Transverse colon (tissue), 4 donors: ENCODE measurements at regions of chr14 and their contacts with region 1.

Region 1: DNA sequence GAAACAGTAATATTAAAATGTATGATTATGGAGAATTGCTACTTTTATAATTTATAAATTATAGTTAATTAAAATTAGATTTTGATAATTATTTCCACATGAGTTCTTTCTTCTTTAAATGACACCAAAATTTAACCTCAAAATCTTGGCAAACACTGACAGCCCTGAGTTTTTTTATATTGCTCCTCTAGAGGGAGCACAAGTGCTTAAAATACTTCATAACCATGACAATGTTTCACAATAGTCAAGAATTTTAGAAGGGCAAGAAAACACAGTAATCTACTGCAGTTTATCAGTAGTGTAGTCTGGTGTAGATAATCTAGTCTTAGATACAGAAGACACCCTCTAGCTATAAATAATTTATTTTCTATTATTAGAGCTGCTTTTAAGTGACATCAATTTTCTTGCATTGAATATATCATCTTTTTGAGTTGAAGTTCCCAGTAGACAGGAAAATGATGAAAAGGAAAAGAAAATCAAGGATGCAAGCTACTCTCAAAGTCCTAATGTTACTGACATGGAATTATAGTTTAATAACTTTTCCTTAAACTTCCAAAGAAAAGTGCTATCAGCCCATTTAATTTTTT is 14.3 kb upstream of the PTGER2 start:
- DNase-seq: no peak
- H3K4me3 ChIP-seq: no peak overlapping the region
- H3K27ac ChIP-seq: no peak overlapping the region
- H3K4me1 ChIP-seq: peaks cover 0 to 17% (median 8%) of the 10 kb centered on the region in 4 donors
- H3K27me3 ChIP-seq: no peaks in the 10 kb centered on the region
- CTCF ChIP-seq: peak; percentile 67 to 81 (median 73)
- EP300 ChIP-seq: no peak
- POLR2A ChIP-seq: no peak

Region 2: DNA sequence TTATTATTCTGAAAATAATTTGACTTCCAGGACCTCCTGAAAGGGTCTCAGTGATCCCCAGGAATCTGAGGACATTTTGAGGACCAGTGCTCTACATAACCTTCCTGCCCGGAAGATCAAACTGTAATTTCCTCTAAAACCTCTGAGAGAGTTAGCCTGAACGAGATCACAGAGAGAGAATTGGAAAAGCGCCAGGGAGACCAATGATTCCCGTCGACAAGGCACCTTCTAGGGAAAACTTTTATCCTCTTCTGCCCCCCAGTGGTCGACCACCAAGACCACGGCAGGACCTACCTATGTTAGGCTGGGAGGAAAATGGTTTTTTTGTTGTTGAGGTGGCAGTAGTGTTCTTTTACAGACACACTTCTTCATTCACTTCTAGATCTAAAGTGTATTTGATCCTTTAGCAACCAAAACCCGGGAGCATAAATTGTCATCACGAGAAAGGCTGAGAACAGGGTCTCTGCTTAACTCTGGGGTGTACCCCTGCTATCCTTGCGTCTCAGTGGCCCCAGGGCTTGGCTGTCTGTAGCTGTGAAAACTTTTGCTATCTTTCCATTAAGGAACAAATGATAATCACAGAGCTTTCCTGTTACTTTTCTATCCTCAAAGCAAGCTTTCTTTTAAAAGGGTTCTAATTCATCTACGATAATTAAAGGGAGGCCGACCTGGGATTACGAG is 168.0 kb before region 1 on chr14:
- in situ Hi-C with region 1: loop called in 1 of 4 experiments (anchors 25 kb)
- intact Hi-C with region 1: no loop called
- DNase-seq: peak; percentile 84
- H3K4me3 ChIP-seq: no peak overlapping the region
- H3K27ac ChIP-seq: peak overlapping the region in 1 of 4 donors; percentile 14
- H3K4me1 ChIP-seq: peaks cover 0 to 14% (median 6%) of the 10 kb centered on the region in 4 donors
- H3K27me3 ChIP-seq: no peaks in the 10 kb centered on the region
- CTCF ChIP-seq: peak; percentile 64 to 82 (median 69)
- EP300 ChIP-seq: no peak
- POLR2A ChIP-seq: no peak

Region 3: DNA sequence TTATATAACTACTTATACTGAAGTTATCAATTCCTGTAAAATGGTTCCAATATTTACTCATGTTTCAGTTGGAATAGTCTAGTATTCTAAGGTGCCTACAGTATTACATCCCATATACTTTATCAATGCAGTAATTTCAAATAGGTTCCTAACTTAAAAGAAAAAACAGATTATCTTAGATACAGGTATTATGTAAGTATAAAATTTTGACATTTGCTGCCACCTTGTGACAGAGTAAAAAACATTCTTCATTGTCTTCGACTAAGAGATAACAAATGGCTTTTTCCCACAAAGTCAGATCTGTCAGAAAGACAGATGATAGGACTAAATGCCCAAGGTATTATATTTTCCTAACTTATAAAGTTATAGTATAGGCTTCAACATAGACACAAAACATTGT is 173.8 kb after region 1 on chr14:
- in situ Hi-C with region 1: loop called (anchors 5 to 10 kb)
- intact Hi-C with region 1: loop called (anchors 5 kb)
- DNase-seq: no peak
- H3K4me3 ChIP-seq: no peak overlapping the region
- H3K27ac ChIP-seq: no peak overlapping the region
- H3K4me1 ChIP-seq: peaks cover 0 to 7% (median 3%) of the 10 kb centered on the region in 4 donors
- H3K27me3 ChIP-seq: no peaks in the 10 kb centered on the region
- CTCF ChIP-seq: peak; percentile 37 to 62 (median 42)
- EP300 ChIP-seq: no peak
- POLR2A ChIP-seq: no peak